ENCODE measurements at regions of chr3 and their contacts with region 1.

Region 1: GRCh38 chr3:188954590-188955208 is 217.1 kb upstream of the TPRG1 start:
- DNase-seq: peak; percentile 60
- ATAC-seq: peak; percentile 66
- H3K4me3 Mint-ChIP-seq: no peak overlapping the region
- H3K27ac Mint-ChIP-seq: no peak overlapping the region
- H3K4me1 Mint-ChIP-seq: peaks cover 25% of the 10 kb centered on the region
- H3K27me3 Mint-ChIP-seq: peaks cover 1% of the 10 kb centered on the region
- CTCF ChIP-seq: no peak

Region 2: DNA sequence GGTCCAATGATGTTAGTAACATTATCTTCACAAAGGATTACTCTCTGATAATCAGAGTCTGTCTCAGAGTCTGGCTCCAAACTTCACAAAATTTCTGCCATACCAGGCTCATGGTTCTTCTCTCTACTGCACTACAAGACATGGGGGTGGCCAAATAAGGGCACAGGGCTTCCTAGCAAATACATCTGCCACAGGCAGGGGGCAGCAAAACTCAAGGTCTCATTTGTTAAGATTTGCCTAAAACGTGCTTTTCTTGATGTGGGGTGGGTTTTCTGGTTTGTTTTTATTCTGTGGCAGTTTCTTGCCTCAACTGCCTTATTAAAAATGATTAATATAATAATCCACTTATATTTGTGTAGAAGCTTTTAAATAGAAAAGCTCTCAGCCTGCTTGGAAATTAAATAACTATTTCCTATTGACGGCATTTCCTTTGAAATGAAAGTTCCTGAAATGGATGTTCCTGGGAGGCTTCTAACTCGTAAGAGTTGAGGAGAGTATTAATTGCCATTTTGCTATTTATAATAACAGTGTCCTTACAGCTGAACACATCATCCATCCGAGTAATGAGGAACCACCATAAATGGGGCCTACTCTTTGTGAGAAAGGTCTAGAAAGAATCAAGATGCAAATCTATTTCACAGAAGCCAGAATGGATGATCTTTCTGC is 1338.3 kb before region 1 on chr3:
- CTCF ChIA-PET with region 1: no interaction called
- POLR2A ChIA-PET with region 1: no interaction called
- intact Hi-C with region 1: loop called (anchors 5 kb)
- DNase-seq: no peak
- ATAC-seq: peak; percentile 47
- H3K4me3 Mint-ChIP-seq: no peak overlapping the region
- H3K27ac Mint-ChIP-seq: no peak overlapping the region
- H3K4me1 Mint-ChIP-seq: no peaks in the 10 kb centered on the region
- H3K27me3 Mint-ChIP-seq: peaks cover 12% of the 10 kb centered on the region
- CTCF ChIP-seq: peak; percentile 26

Region 3: GRCh38 chr3:188212308-188212969 is 742.3 kb before region 1 on chr3:
- CTCF ChIA-PET with region 1: interaction called, 5 read pairs
- POLR2A ChIA-PET with region 1: no interaction called
- intact Hi-C with region 1: loop called (anchors 10 kb)
- DNase-seq: no peak
- ATAC-seq: no peak
- H3K4me3 Mint-ChIP-seq: no peak overlapping the region
- H3K27ac Mint-ChIP-seq: peak overlapping the region; percentile 88
- H3K4me1 Mint-ChIP-seq: peaks cover 43% of the 10 kb centered on the region
- H3K27me3 Mint-ChIP-seq: no peaks in the 10 kb centered on the region
- CTCF ChIP-seq: no peak

Region 4: GRCh38 chr3:188362405-188362831 is 592.3 kb before region 1 on chr3:
- CTCF ChIA-PET with region 1: interaction called, 3 read pairs
- POLR2A ChIA-PET with region 1: interaction called, 3 read pairs
- intact Hi-C with region 1: loop called (anchors 1 kb)
- DNase-seq: no peak
- ATAC-seq: peak; percentile 63
- H3K4me3 Mint-ChIP-seq: peak overlapping the region; percentile 24
- H3K27ac Mint-ChIP-seq: peak overlapping the region; percentile 80
- H3K4me1 Mint-ChIP-seq: peaks cover 78% of the 10 kb centered on the region
- H3K27me3 Mint-ChIP-seq: no peaks in the 10 kb centered on the region
- CTCF ChIP-seq: no peak

Region 5: DNA sequence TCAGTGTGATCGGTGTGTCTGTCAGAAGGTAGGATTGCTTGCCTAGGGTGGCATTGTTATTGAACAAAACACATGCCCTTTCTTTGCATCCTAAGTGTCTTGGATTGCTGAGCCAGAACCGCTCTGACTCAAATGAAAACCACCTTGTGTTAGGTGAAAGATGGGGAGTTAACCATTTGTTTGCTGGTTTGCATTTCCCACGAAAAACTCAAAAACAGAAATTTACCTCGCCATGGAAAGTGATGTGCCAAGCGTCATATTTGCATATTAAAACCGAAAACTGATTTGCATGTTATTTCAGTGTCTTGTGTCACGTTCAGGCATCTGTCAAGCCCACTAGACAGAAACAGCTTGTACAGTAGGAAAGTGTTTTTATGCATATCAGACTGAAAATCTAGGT is 257.6 kb before region 1 on chr3:
- CTCF ChIA-PET with region 1: interaction called, 3 read pairs
- POLR2A ChIA-PET with region 1: interaction called, 3 read pairs
- intact Hi-C with region 1: loop called (anchors 5 kb)
- DNase-seq: no peak
- ATAC-seq: peak; percentile 80
- H3K4me3 Mint-ChIP-seq: peak overlapping the region; percentile 20
- H3K27ac Mint-ChIP-seq: peak overlapping the region; percentile 86
- H3K4me1 Mint-ChIP-seq: peaks cover 72% of the 10 kb centered on the region
- H3K27me3 Mint-ChIP-seq: no peaks in the 10 kb centered on the region
- CTCF ChIP-seq: no peak

Region 6: DNA sequence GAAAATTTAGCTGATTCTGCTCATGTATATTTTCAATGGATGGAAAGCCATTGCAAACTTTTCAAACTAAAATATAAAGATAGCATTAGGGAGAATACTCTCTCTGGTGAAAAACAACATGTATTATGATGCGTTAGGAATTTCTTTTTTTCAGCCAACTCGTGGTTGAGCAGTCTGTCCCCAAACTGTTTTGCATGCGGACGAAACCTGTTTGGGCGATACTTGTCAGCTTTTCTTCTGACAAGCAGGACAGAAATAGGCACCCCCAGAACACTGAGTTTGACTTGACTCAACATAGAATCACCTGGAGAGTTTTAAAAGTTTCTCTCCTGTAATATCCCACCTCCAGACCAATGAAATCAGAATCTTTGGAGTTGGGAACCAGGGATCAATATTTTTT is 200.4 kb before region 1 on chr3:
- CTCF ChIA-PET with region 1: interaction called, 22 read pairs
- POLR2A ChIA-PET with region 1: interaction called, 16 read pairs
- intact Hi-C with region 1: loop called (anchors 1 kb)
- DNase-seq: no peak
- ATAC-seq: peak; percentile 23
- H3K4me3 Mint-ChIP-seq: peak overlapping the region; percentile 56
- H3K27ac Mint-ChIP-seq: peak overlapping the region; percentile 98
- H3K4me1 Mint-ChIP-seq: peaks cover 70% of the 10 kb centered on the region
- H3K27me3 Mint-ChIP-seq: no peaks in the 10 kb centered on the region
- CTCF ChIP-seq: no peak